Heart right ventricle (tissue), 16 donors: ENCODE measurements at regions of chr2 and their contacts with region 1.

Region 1: DNA sequence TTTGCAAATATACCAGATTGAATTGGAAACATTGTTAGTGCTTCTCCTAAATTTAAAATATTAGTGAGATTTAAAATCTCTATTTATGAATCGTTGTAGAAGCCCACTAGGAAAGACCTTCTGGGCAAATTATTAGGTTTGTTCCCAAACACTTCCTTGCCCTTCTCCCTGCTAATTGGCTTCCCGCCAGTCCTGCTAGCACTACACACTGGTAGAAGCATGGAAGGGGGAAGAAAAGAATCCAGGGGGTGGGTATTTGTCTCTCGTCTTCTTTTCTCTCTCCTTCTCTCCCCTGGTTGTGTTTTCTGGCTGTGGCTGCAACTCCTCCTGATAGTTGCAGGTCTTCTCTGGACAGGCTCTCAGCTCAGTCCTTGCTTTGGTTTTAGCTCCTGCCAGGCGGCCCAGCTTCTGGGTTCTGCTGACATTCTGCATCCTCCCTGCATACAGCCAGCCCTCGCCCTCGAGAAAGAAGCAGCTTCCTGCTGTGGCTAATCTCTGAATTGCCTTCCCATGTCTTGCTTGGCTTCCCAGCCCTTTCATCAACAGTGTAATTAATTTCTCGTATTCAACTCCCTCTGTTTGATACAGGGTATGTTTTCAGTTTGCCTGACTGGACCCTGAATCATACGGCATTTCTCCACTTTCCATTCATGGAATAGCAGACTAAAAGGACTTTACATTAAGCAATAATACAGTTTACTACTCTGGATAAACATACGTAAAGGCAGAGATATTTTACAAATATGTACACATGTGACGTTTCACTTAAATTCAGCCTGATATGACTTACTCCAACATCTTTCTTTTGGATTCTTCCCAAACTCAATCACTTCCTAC is 6.9 kb upstream of the PARD3B start:
- DNase-seq: no peak
- ATAC-seq: no peak
- H3K4me3 ChIP-seq: no peak overlapping the region
- H3K27ac ChIP-seq: no peak overlapping the region
- H3K4me1 ChIP-seq: no peaks in the 10 kb centered on the region
- H3K27me3 ChIP-seq: peaks cover 0 to under 1% (median 0%) of the 10 kb centered on the region in 7 donors
- CTCF ChIP-seq: no peak

Region 2: GRCh38 chr2:202703091-202703490 is 1835.3 kb before region 1 on chr2:
- intact Hi-C with region 1: loop called in 1 of 10 experiments (anchors 5 kb)
- DNase-seq: no peak
- ATAC-seq: no peak
- H3K4me3 ChIP-seq: no peak overlapping the region
- H3K27ac ChIP-seq: no peak overlapping the region
- H3K4me1 ChIP-seq: no peaks in the 10 kb centered on the region
- H3K27me3 ChIP-seq: no peaks in the 10 kb centered on the region
- CTCF ChIP-seq: no peak

Region 3: DNA sequence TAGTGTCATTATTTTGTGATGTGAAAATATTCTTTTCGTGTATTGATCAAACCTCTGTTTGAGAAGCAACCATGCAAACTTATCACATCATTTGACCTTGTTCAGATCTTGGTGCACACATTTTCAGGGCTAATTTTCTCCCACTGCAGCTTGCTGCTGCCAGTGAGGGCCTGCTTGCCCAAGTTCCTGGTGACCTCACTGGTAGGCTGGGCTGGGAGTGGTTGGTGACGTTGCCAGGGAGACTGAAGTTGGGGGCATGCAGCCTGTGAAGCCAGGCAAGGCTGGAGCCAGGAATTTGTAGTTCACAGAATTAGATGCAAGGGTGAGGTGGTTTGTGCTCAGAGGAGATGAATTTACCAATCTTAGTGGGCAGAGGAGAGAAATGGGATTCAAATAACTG is 45.4 kb after region 1 on chr2:
- intact Hi-C with region 1: no loop called
- DNase-seq: no peak
- ATAC-seq: no peak
- H3K4me3 ChIP-seq: no peak overlapping the region
- H3K27ac ChIP-seq: no peak overlapping the region
- H3K4me1 ChIP-seq: no peaks in the 10 kb centered on the region
- H3K27me3 ChIP-seq: no peaks in the 10 kb centered on the region
- CTCF ChIP-seq: no peak

Region 4: GRCh38 chr2:205665806-205666205 is 1127.4 kb after region 1 on chr2:
- intact Hi-C with region 1: loop called in 1 of 10 experiments (anchors 5 kb)
- DNase-seq: no peak
- ATAC-seq: no peak
- H3K4me3 ChIP-seq: no peak overlapping the region
- H3K27ac ChIP-seq: no peak overlapping the region
- H3K4me1 ChIP-seq: peaks cover 0 to 5% (median 0%) of the 10 kb centered on the region in 9 donors
- H3K27me3 ChIP-seq: peaks cover 0 to 2% (median 0%) of the 10 kb centered on the region in 7 donors
- CTCF ChIP-seq: no peak